ENCODE measurements at regions of chr4 and their contacts with region 1.

Region 1: GRCh38 chr4:17324386-17324830 is 187.5 kb downstream of the QDPR start:
- DNase-seq: peak; percentile 30
- H3K4me3 ChIP-seq: no peak overlapping the region
- H3K27ac ChIP-seq: no peak overlapping the region
- H3K4me1 ChIP-seq: no peaks in the 10 kb centered on the region
- H3K27me3 ChIP-seq: no peaks in the 10 kb centered on the region
- CTCF ChIP-seq: peak; percentile 28

Region 2: DNA sequence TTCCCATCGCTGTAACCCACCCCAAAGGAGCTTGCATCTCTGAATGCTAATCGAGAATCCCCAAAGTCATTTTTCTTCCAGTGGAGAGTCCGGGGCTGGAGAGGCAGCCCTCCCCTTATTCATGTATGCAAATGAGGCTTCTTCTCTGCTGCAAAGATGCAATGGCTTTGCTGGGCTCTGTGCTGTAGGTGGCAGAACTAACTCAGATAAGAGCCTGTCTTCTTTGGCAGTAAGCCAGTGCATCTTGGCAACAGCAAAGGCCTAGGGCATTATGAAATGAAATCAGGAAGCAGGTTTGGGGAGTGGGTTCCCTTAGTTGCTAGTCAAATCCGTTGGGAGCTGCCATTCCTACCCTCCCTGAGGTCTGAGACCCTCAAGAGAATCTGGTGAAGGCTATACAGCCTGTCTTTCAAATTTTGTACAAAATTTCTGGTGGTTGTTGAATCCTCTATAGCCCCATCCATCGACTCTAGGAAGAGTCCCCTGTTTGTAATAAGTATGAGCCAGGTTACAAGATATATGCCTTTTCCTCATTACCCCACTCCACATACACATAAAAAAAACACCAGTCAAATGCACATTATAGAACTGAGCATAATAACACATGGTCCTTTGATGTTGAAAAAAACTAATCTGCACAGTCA is 807.5 kb before region 1 on chr4:
- intact Hi-C with region 1: loop called (anchors 10 kb)
- DNase-seq: peak; percentile 25
- H3K4me3 ChIP-seq: no peak overlapping the region
- H3K27ac ChIP-seq: no peak overlapping the region
- H3K4me1 ChIP-seq: no peaks in the 10 kb centered on the region
- H3K27me3 ChIP-seq: no peaks in the 10 kb centered on the region
- CTCF ChIP-seq: no peak

Region 3: GRCh38 chr4:16608123-16608522 is 716.3 kb before region 1 on chr4:
- intact Hi-C with region 1: no loop called
- DNase-seq: no peak
- H3K4me3 ChIP-seq: no peak overlapping the region
- H3K27ac ChIP-seq: no peak overlapping the region
- H3K4me1 ChIP-seq: no peaks in the 10 kb centered on the region
- H3K27me3 ChIP-seq: no peaks in the 10 kb centered on the region
- CTCF ChIP-seq: no peak

Region 4: GRCh38 chr4:16794816-16795445 is 529.5 kb before region 1 on chr4:
- intact Hi-C with region 1: loop called (anchors 10 kb)
- DNase-seq: peak; percentile 46
- H3K4me3 ChIP-seq: no peak overlapping the region
- H3K27ac ChIP-seq: no peak overlapping the region
- H3K4me1 ChIP-seq: no peaks in the 10 kb centered on the region
- H3K27me3 ChIP-seq: no peaks in the 10 kb centered on the region
- CTCF ChIP-seq: peak; percentile 33

Measured in colonic mucosa (tissue), 4 donors.